Activated T-helper 1 cell treated with anti-CD3 and anti-CD28 coated beads, Interleukin-12 subunit alpha, Interleukin-12 subunit beta, Interleukin-2, Interleukin-4 antibody, amounts not matched to agents 30 ng/mL and 10 ng/mL and 1 ng/mL, durations not matched to agents 14 hours and 24 hours and 36 hours (primary cell): ENCODE measurements at regions of chr7 and their contacts with region 1.

Region 1: GRCh38 chr7:70698219-70698832 is 433.6 kb upstream of the GALNT17 start:
- DNase-seq: no peak
- H3K4me3 Mint-ChIP-seq: no peak overlapping the region
- H3K27ac Mint-ChIP-seq: no peak overlapping the region
- H3K4me1 Mint-ChIP-seq: peaks cover 7% of the 10 kb centered on the region
- H3K27me3 Mint-ChIP-seq: peaks cover 35% of the 10 kb centered on the region

Region 2: GRCh38 chr7:70456719-70457118 is 241.6 kb before region 1 on chr7:
- intact Hi-C with region 1: loop called (anchors 5 kb)
- DNase-seq: no peak
- H3K4me3 Mint-ChIP-seq: no peak overlapping the region
- H3K27ac Mint-ChIP-seq: no peak overlapping the region
- H3K4me1 Mint-ChIP-seq: no peaks in the 10 kb centered on the region
- H3K27me3 Mint-ChIP-seq: peaks cover 4% of the 10 kb centered on the region

Region 3: DNA sequence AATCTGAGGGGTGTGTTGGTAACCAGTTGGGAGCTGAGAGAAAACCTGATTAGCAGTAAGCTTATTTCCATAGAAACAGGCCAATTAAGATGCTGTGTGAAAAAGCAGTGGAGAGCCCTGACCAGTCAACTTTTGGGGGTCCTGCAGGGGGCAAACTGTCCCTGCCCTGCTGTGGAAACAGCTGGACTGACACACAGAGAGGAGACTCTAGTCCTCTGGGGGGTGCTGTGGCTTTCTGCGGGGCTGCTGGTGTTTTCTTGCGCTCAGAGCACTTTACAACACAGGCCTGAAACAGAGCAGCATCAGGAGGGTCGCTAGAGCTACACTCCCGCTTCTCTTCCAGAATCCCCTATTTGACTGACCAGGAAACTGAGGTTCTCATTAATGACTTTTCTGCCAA is 113.3 kb before region 1 on chr7:
- intact Hi-C with region 1: loop called (anchors 5 kb)
- DNase-seq: no peak
- H3K4me3 Mint-ChIP-seq: no peak overlapping the region
- H3K27ac Mint-ChIP-seq: no peak overlapping the region
- H3K4me1 Mint-ChIP-seq: no peaks in the 10 kb centered on the region
- H3K27me3 Mint-ChIP-seq: peaks cover 4% of the 10 kb centered on the region

Region 4: GRCh38 chr7:70647801-70648498 is 50.4 kb before region 1 on chr7:
- intact Hi-C with region 1: loop called (anchors 5 kb)
- DNase-seq: peak; percentile 76
- H3K4me3 Mint-ChIP-seq: peak overlapping the region; percentile 0
- H3K27ac Mint-ChIP-seq: peak overlapping the region; percentile 31
- H3K4me1 Mint-ChIP-seq: peaks cover 15% of the 10 kb centered on the region
- H3K27me3 Mint-ChIP-seq: peaks cover 14% of the 10 kb centered on the region

Region 5: DNA sequence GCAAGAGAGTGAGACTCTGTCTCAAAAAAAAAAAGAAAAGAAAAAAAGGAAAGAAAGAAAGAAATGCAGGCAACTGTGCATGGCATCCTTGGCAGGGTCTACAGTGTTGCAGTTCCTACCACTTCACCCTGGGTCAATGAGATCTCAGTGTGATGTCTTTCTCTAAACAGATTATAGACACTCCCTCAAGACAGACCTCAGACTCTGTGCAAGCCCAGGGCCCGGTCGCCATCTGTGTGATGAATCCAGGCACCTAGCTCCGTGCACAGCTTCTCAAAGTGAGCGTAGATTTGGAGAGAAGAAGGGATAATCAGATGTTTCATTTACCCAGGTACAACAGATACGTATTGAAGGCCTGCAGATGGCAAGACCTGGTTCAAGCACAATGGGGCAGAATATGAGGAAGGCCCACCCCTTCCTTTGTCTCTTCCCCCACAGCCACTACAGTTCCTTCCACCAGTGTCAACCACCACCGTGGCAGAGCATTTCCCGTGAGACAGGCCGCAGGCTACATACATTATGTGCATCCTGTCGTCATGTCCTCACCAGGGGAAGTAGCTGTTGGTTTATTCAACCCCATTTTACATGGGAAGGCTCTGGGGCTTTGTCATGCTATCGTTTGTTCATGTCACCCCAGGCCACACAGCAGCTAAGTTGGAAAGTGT is 38.0 kb before region 1 on chr7:
- intact Hi-C with region 1: no loop called
- DNase-seq: peak; percentile 6
- H3K4me3 Mint-ChIP-seq: no peak overlapping the region
- H3K27ac Mint-ChIP-seq: no peak overlapping the region
- H3K4me1 Mint-ChIP-seq: peaks cover 16% of the 10 kb centered on the region
- H3K27me3 Mint-ChIP-seq: peaks cover under 1% of the 10 kb centered on the region